ENCODE measurements at regions of chr1 and their contacts with region 1.

Region 1: DNA sequence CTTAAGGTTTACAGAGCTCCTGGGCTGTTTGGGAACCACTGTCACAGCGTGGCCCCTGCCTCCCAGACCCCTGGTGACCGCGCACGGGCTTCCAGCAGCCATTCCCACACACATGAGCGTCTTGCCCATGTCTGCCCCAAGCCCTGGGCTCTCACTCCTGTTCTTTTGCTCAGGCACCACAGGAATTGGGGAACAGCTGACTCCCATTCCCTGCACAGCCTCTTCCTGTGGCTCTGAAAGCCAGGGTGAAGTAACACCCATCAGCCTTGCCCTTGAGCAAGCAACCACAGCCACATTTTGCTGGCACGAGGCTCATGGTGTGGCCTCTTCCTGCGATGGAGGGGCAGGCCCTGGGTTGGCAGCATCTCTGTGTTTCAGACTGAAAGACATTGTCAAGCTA is 14.3 kb upstream of the GPR157 start:
- DNase-seq: no peak
- ATAC-seq: peak in 2 of 4 donors; percentile 14 to 29
- H3K4me3 ChIP-seq: no peak overlapping the region
- H3K27ac ChIP-seq: no peak overlapping the region
- H3K4me1 ChIP-seq: no peaks in the 10 kb centered on the region
- H3K27me3 ChIP-seq: no peaks in the 10 kb centered on the region
- CTCF ChIP-seq: no peak
- POLR2A ChIP-seq: no peak

Region 2: DNA sequence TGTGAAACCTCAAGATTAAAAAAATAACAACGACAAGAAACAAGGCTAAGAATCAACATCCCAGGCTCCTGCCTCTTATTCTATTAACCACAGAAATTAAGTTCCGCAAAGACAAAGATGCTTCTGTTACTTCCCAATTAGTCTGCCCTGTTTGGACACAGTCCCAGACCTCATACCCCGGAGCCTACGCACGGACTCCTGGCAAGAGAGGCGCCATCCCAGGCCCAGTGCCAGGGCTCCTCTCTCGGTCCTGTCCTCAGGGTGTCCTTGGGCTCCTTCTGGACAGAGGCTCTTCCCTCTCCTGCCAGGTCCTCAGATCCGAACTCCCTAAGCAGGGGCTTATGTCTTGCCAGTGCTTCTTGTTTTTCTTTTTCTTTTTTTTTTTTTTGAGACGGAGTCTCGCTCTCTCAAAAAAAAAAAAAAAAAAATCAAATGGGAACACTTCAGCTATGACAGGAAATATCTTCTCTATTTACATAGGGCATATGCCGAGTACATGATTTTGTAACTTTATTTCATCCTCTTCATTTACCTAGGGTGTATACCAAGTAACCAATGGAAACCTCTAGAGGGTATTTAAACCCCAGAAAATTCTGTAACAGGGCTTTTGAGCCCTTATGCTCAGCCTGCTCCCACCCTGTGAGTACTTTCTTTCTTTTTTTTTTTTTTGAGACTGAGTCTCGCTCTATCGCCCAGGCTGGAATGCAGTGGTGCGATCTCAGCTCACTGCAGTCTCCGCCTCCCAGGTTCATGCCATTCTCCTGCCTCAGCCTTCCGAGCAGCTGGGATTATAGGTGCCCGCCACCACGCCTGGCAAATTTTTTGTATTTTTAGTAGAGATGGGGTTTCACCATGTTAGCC is 253.1 kb before region 1 on chr1:
- intact Hi-C with region 1: no loop called
- DNase-seq: peak; percentile 82 to 93 (median 88)
- ATAC-seq: peak; percentile 86 to 95 (median 94)
- H3K4me3 ChIP-seq: no peak overlapping the region
- H3K27ac ChIP-seq: peak overlapping the region in 1 of 3 donors; percentile 51
- H3K4me1 ChIP-seq: peaks cover 0 to 19% (median 0%) of the 10 kb centered on the region in 4 donors
- H3K27me3 ChIP-seq: no peaks in the 10 kb centered on the region
- CTCF ChIP-seq: no peak
- POLR2A ChIP-seq: peak; percentile 9

Region 3: DNA sequence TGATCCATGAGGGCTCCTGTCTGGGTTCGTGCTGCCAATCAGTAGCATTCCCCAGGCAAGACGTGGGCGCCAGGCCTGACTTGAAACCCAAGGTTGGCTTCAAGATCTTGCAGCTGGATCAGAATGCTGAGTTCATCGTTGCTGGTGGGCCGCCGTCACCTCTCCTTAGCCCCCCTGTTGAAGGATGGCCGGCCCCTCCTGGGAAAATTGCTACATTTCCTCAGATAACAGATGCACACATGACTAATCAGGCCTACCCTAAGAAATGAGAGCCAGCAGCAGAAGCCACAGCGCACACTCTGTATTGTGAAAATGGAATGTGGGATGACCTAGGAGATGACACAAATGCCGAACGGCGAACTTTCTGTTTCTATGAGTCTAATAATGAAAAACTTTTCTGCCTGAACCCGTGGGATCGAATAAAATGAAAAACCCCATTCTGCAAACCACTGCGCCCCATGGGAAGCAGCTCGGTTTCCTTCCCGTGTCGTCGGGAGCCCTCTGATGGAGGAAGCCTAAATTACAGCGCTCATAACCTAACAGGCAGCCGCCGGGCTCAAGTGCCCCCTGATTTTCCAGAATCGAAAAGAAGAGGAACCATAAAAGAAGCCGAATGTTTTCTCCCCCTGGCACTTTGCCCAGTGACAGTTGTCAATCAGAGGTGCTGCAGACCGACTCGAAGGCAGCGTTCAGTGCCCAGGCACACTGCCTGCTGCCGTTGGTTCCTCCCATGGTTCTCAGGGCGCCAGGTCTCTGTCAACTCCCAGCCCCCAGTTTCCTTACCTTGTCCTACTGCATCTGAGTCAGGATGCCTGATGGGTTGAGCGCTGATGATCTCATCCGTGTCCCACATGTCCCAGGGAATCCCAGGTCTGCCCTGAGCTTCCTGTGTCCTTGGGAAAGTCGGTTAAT is 53.1 kb after region 1 on chr1:
- intact Hi-C with region 1: loop called (anchors 5 kb)
- DNase-seq: peak; percentile 58 to 73 (median 65)
- ATAC-seq: peak; percentile 71 to 90 (median 83)
- H3K4me3 ChIP-seq: no peak overlapping the region
- H3K27ac ChIP-seq: peak overlapping the region in 1 of 3 donors; percentile 7
- H3K4me1 ChIP-seq: peaks cover 0 to 10% (median 0%) of the 10 kb centered on the region in 4 donors
- H3K27me3 ChIP-seq: no peaks in the 10 kb centered on the region
- CTCF ChIP-seq: peak; percentile 71 to 85 (median 84)
- POLR2A ChIP-seq: no peak

Measured in right lobe of liver (tissue), 6 donors.